ENCODE measurements at regions of chr5 and their contacts with region 1.

Region 1: DNA sequence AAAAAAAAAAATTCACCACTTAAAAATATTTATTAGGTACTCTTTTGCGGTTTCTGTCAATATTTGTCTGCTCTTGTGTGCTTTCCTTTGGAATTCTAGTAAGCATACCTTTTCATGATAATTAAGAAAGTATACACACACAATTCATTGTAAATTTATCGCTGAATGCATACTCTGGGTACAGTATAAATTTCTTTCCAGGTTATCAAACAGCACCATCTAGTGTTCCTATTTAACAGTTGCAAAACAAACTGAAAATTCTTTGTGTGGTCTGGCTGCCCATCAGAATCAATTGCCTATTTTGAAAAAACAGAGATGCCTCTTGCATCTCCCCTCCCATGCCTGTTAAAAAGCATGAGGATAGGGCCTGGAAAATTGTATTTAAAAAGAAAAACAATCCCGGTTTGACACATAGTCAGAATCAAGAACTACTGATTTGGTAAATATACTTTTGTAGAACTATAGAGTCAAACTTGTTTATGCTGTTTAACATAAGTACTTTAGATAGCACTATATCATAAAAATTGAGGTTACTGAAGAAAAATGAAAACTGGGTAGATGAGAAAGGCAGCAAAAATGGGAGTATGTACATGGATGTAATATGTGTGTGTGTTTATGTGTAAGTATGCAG is 16.2 kb downstream of the PGGT1B start:
- DNase-seq: no peak
- H3K4me3 Mint-ChIP-seq: no peak overlapping the region
- H3K27ac Mint-ChIP-seq: no peak overlapping the region
- H3K4me1 Mint-ChIP-seq: peaks cover 12% of the 10 kb centered on the region
- H3K27me3 Mint-ChIP-seq: no peaks in the 10 kb centered on the region

Region 2: GRCh38 chr5:113846932-113847331 is 1399.5 kb before region 1 on chr5:
- intact Hi-C with region 1: no loop called
- DNase-seq: no peak
- H3K4me3 Mint-ChIP-seq: no peak overlapping the region
- H3K27ac Mint-ChIP-seq: no peak overlapping the region
- H3K4me1 Mint-ChIP-seq: no peaks in the 10 kb centered on the region
- H3K27me3 Mint-ChIP-seq: no peaks in the 10 kb centered on the region

Region 3: GRCh38 chr5:115098041-115098702 is 148.3 kb before region 1 on chr5:
- intact Hi-C with region 1: loop called (anchors 1 kb)
- DNase-seq: peak; percentile 75
- H3K4me3 Mint-ChIP-seq: no peak overlapping the region
- H3K27ac Mint-ChIP-seq: no peak overlapping the region
- H3K4me1 Mint-ChIP-seq: peaks cover 2% of the 10 kb centered on the region
- H3K27me3 Mint-ChIP-seq: peaks cover 23% of the 10 kb centered on the region

Region 4: DNA sequence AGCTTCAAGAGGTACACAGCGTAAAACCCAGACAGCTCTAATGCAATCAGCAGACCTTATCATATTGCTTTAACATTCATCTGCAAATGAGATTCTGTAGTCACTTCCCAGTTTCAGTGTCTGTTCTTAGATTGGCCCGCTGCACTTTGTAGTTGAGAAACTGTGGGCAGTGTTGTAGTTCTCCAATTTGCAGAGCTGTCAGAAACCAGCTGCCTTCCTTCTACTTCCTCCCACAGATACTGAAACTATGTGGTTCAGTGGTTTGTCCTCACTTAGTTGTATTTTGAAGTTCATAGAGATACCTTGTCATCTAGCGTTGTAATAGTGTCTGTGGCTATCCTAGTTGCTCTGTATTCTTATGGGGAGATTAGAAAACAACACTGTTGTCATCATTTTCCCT is 37.2 kb before region 1 on chr5:
- intact Hi-C with region 1: loop called (anchors 2 kb)
- DNase-seq: peak; percentile 90
- H3K4me3 Mint-ChIP-seq: peak overlapping the region; percentile 24
- H3K27ac Mint-ChIP-seq: peak overlapping the region; percentile 68
- H3K4me1 Mint-ChIP-seq: peaks cover 19% of the 10 kb centered on the region
- H3K27me3 Mint-ChIP-seq: no peaks in the 10 kb centered on the region